AG04449 (cell line): ENCODE measurements at regions of chr6 and their contacts with region 1.

Region 1: DNA sequence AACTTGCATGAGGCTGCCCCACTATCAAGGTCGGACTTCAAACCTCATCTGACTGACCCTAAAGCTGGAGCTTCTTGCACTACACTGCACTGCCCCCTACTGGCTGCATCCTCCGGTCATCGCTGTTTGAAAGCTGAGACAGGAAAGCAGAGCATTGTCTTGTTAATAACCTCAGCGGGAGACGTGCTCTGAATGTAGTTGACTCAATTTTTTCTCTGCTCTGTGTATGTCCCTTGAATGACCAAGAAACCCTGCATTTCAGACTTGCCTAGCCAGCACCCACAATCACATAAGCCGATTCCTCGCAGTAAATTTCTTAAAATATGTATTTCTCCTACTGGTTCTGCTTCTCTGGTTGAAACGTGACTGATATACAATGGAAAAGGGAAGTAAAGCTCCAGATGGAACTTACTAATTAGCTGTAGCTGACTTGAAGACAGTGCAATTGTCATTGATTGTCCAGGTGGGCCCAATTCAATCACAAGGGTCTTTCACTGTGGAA is 27.8 kb downstream of the TCF21 start:
- DNase-seq: peak; percentile 71
- H3K4me3 ChIP-seq: no peak overlapping the region
- CTCF ChIP-seq: peak; percentile 91

Region 2: GRCh38 chr6:132962936-132963868 is 953.5 kb before region 1 on chr6:
- CTCF ChIA-PET with region 1: interaction called, 13 read pairs
- POLR2A ChIA-PET with region 1: no interaction called
- DNase-seq: no peak
- H3K4me3 ChIP-seq: no peak overlapping the region
- CTCF ChIP-seq: peak; percentile 79

Region 3: DNA sequence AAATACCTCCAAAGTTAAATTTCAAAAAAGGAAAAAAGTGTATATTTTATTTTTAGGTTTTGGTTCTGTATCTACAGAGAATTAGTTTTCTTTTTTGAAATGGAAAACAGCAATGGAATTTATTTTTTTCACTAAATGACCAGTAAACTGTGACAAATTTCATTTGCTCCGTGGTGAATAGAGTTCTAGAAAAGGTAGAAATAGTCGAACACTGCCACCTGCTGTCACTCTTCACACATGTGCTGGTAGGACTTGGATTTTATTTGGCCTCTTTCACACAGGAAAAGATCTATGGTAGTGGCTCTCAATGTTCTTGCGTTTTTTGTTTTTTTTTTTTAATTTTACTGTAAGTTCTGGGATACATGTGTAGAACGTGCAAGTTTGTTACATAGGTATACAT is 363.0 kb before region 1 on chr6:
- CTCF ChIA-PET with region 1: interaction called, 22 read pairs
- POLR2A ChIA-PET with region 1: no interaction called
- DNase-seq: peak; percentile 38
- H3K4me3 ChIP-seq: no peak overlapping the region
- CTCF ChIP-seq: peak; percentile 69

Region 4: GRCh38 chr6:133584823-133585222 is 331.9 kb before region 1 on chr6:
- CTCF ChIA-PET with region 1: interaction called, 12 read pairs
- POLR2A ChIA-PET with region 1: no interaction called
- DNase-seq: no peak
- H3K4me3 ChIP-seq: no peak overlapping the region
- CTCF ChIP-seq: no peak

Region 5: DNA sequence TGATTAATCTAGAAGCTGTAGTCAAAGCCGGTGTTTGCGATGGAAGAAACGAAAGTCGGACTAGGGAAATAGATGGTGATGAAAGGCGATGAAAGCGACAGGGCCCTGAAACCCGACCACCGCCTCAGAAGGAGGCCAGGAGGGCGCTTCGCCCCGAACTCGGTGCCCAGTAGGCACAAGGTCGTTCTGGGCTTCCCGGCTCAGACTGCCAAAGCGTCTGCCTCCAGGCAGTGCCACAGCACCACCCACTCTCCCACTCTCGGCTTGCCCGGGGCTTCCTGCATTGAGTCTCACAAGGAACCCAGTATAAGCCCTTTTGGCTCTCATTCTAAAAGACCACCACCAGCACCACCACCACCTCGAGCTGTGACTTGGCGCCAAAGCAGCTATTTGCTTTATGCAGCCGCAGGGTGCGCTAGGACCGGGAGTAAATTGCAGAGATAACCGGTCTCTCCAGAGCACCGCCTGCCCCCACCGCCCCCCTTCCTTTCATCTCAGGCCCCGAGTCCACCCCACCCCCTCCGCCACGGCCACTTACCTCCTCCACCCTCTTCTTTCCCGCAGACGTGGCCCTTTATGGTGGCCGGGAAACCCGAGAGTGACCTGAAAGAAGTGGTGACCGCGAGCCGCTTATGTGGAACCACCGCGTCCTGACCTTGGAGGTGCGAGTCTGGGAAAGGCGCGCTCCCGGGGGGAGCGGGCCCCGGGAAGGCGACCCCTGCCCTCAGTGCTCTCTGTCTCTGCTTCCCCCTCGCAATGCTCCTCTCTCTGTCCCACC is 25.4 kb before region 1 on chr6:
- CTCF ChIA-PET with region 1: interaction called, 35 read pairs
- POLR2A ChIA-PET with region 1: no interaction called
- DNase-seq: no peak
- H3K4me3 ChIP-seq: peak overlapping the region; percentile 71
- CTCF ChIP-seq: no peak

Region 6: GRCh38 chr6:133991096-133991593 is 74.4 kb after region 1 on chr6:
- CTCF ChIA-PET with region 1: no interaction called
- POLR2A ChIA-PET with region 1: no interaction called
- DNase-seq: peak; percentile 92
- H3K4me3 ChIP-seq: no peak overlapping the region
- CTCF ChIP-seq: no peak